Sigmoid colon (tissue), 7 donors: ENCODE measurements at regions of chr12 and their contacts with region 1.

Region 1: GRCh38 chr12:20369305-20370005 is 1.1 kb downstream of the PDE3A start:
- DNase-seq: peak; percentile 94
- H3K4me3 ChIP-seq: peak overlapping the region; percentile 81 to 89 (median 84)
- H3K27ac ChIP-seq: peak overlapping the region; percentile 91 to 96 (median 94)
- H3K4me1 ChIP-seq: peaks cover 0 to 25% (median 18%) of the 10 kb centered on the region in 4 donors
- H3K27me3 ChIP-seq: no peaks in the 10 kb centered on the region
- CTCF ChIP-seq: peak in 3 of 4 experiments; percentile 22 to 37 (median 23)
- EP300 ChIP-seq: peak in 1 of 4 donors; percentile 3
- POLR2A ChIP-seq: peak; percentile 60 to 71

Region 2: GRCh38 chr12:19744734-19745218 is 624.7 kb before region 1 on chr12:
- intact Hi-C with region 1: loop called (anchors 5 kb)
- DNase-seq: no peak
- H3K4me3 ChIP-seq: no peak overlapping the region
- H3K27ac ChIP-seq: peak overlapping the region in 1 of 4 donors; percentile 17
- H3K4me1 ChIP-seq: peaks cover 0 to 42% (median 17%) of the 10 kb centered on the region in 4 donors
- H3K27me3 ChIP-seq: no peaks in the 10 kb centered on the region
- CTCF ChIP-seq: no peak
- EP300 ChIP-seq: peak in 1 of 4 donors; percentile 43
- POLR2A ChIP-seq: no peak

Region 3: DNA sequence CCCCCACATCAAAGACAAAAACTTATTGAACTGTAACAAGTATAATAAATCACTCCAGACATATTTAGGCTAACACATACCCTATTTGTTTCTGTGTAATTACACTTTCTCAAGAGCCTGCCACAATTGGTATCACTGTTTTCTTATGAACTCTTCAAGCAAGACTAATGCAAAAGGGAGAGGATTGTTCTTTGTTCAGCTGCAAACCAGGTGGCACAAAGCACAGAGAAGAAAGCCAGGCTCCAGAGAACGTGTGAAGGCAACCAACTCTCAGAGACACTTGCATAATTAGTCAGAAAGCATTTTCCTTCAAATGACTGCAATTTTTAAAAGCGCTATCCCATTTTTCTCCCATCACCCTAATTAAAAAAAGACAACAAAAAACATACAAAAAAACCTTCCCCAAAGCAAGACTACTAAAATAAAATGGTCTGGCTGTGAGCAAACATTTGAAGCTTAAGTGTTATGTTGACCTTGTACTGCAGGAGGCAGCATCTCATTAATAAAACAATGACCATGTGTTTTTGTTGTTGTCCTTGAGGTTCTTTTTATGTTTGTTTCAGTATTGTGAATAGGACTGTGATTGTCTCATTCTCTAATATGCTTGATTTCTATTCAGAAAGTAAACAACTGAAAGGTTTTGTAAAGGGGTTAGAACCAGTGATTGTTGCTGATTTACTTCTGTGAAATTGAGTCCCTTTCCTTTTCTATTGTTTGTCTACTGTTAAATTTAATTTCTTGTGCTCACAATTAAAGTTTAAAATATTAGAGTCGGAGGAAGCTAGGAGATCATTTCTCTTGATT is 453.9 kb before region 1 on chr12:
- intact Hi-C with region 1: loop called (anchors 5 kb)
- DNase-seq: no peak
- H3K4me3 ChIP-seq: no peak overlapping the region
- H3K27ac ChIP-seq: no peak overlapping the region
- H3K4me1 ChIP-seq: peaks cover 0 to 19% (median 12%) of the 10 kb centered on the region in 4 donors
- H3K27me3 ChIP-seq: no peaks in the 10 kb centered on the region
- CTCF ChIP-seq: peak; percentile 52 to 75 (median 54)
- EP300 ChIP-seq: no peak
- POLR2A ChIP-seq: no peak

Region 4: GRCh38 chr12:20125276-20125798 is 244.1 kb before region 1 on chr12:
- intact Hi-C with region 1: loop called (anchors 10 kb)
- DNase-seq: no peak
- H3K4me3 ChIP-seq: no peak overlapping the region
- H3K27ac ChIP-seq: peak overlapping the region in 2 of 4 donors; percentile 35 to 49
- H3K4me1 ChIP-seq: peaks cover 0 to 68% (median 25%) of the 10 kb centered on the region in 4 donors
- H3K27me3 ChIP-seq: no peaks in the 10 kb centered on the region
- CTCF ChIP-seq: no peak
- EP300 ChIP-seq: no peak
- POLR2A ChIP-seq: no peak

Region 5: DNA sequence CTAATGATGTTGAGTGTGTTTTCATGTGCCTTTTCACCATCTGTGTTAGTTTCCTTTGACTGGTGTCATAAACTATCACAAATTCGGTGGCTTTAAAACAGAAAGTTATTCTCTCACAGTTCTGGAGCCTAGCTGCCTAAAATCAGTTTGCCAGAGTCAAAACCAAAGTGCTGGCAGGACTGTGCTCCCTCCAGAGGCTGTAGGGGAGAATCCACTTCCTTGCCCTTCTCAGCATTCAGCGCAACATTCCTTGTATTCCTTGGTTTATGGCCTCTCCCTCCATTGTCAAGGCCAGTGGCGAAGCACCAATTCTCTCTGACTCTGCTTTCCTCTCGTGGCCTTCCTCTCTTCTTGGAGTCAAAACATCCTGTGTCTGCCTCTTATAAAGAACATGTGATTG is 175.3 kb before region 1 on chr12:
- intact Hi-C with region 1: no loop called
- DNase-seq: no peak
- H3K4me3 ChIP-seq: no peak overlapping the region
- H3K27ac ChIP-seq: no peak overlapping the region
- H3K4me1 ChIP-seq: peaks cover 0 to 20% (median 4%) of the 10 kb centered on the region in 4 donors
- H3K27me3 ChIP-seq: no peaks in the 10 kb centered on the region
- CTCF ChIP-seq: peak in 1 of 4 experiments; percentile 24
- EP300 ChIP-seq: no peak
- POLR2A ChIP-seq: no peak

Region 6: DNA sequence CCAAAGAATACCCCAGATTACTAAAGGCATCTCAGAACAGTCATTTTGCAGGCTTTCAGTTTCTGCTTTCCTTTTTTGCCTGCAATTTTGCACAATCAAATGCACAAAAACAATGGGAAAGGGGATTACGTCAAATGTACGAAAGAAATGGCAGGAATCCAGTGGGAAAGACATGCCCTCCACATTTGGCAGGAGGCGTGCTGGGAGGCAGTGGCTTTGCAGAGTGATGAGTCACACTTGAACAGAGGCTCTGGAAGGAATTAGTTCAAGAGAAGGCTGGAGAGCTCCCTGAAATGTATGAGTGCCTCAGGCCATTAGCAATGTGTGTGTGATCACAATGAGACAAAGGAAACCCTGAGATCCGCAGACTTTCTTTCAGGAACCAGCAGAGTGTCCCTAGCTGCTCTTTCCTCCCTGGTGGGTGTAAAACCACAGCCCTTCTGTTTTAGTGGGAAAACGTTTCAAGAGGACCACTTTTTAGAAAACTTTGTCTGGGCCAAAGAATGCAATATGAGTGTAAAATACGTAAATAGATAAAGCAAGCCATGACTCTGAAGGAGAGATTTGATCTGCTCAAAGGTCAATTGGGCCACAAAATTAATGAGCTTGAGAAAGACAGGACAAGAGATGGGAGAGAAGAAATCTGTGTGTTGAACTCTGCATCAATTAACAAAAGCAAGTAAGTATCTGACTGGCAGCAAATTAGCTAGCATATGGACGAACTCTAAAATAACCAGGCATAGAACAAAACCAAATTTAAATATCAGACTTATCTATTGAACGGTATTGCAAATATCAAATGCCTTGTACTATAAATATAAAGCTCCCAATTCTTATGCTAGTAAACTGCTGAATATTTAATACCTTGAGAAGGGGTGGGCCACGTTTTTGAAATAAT is 156.5 kb before region 1 on chr12:
- intact Hi-C with region 1: loop called (anchors 5 kb)
- DNase-seq: peak; percentile 95
- H3K4me3 ChIP-seq: peak overlapping the region in 2 of 4 donors; percentile 15 to 21
- H3K27ac ChIP-seq: peak overlapping the region; percentile 74 to 88 (median 78)
- H3K4me1 ChIP-seq: peaks cover 0 to 38% (median 32%) of the 10 kb centered on the region in 4 donors
- H3K27me3 ChIP-seq: no peaks in the 10 kb centered on the region
- CTCF ChIP-seq: no peak
- EP300 ChIP-seq: peak in 1 of 4 donors; percentile 71
- POLR2A ChIP-seq: no peak

Region 7: DNA sequence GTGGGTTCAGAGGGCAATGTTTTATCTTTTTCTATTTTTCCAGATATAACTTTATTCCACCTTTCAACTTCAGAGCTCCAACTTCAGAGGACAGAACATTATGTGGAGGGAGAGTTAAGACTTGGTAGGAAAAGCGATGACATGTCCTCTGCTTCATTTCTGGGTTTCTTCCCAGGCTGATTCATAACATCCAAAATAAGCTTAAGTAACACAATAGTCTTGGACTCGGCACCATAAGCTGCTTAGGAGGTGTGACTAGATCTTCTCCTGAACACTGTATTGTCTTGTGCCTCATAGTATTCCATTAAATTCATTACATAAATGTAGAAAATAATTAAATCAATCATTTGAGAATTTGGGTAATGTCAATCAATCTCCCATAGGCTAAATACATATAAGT is 96.7 kb before region 1 on chr12:
- intact Hi-C with region 1: loop called (anchors 5 kb)
- DNase-seq: no peak
- H3K4me3 ChIP-seq: no peak overlapping the region
- H3K27ac ChIP-seq: peak overlapping the region; percentile 59 to 74 (median 67)
- H3K4me1 ChIP-seq: peaks cover 0 to 64% (median 32%) of the 10 kb centered on the region in 4 donors
- H3K27me3 ChIP-seq: no peaks in the 10 kb centered on the region
- CTCF ChIP-seq: no peak
- EP300 ChIP-seq: no peak
- POLR2A ChIP-seq: no peak

Region 8: GRCh38 chr12:20283467-20283866 is 86.0 kb before region 1 on chr12:
- intact Hi-C with region 1: no loop called
- DNase-seq: no peak
- H3K4me3 ChIP-seq: no peak overlapping the region
- H3K27ac ChIP-seq: no peak overlapping the region
- H3K4me1 ChIP-seq: no peaks in the 10 kb centered on the region
- H3K27me3 ChIP-seq: no peaks in the 10 kb centered on the region
- CTCF ChIP-seq: no peak
- EP300 ChIP-seq: no peak
- POLR2A ChIP-seq: no peak

Region 9: DNA sequence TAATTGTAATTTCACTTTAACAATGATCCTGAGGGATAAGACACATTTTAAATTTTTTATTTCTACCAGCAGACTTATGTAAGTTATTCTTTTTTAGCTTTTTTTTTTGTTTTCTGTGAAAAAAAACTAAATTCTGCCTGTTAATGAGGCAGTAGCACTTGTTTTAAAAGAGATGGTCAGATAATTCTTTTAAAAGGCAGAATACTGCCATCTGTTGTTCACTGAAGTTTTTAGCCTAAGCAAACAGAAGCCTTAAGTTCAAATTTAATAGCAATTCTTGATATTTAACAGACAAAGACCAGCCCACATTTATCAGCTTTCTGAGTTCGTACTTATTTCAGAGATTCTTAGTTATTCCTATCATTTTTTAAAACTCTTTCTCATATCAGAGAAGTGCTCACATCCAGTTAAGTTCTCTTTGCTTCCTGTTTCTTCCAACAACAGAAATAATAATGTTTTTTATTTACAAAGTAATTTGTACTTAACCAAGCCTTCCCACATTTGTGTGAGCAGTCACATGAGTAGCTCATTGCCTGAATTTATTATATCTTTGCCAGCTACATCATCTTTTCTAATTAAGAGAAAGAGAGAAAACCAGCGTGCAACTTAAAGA is 232.3 kb after region 1 on chr12:
- intact Hi-C with region 1: loop called (anchors 2 kb)
- DNase-seq: no peak
- H3K4me3 ChIP-seq: peak overlapping the region in 2 of 4 donors; percentile 1 to 5
- H3K27ac ChIP-seq: peak overlapping the region; percentile 42 to 80 (median 69)
- H3K4me1 ChIP-seq: peaks cover 0 to 44% (median 18%) of the 10 kb centered on the region in 4 donors
- H3K27me3 ChIP-seq: no peaks in the 10 kb centered on the region
- CTCF ChIP-seq: peak; percentile 20 to 57 (median 38)
- EP300 ChIP-seq: no peak
- POLR2A ChIP-seq: no peak

Region 10: DNA sequence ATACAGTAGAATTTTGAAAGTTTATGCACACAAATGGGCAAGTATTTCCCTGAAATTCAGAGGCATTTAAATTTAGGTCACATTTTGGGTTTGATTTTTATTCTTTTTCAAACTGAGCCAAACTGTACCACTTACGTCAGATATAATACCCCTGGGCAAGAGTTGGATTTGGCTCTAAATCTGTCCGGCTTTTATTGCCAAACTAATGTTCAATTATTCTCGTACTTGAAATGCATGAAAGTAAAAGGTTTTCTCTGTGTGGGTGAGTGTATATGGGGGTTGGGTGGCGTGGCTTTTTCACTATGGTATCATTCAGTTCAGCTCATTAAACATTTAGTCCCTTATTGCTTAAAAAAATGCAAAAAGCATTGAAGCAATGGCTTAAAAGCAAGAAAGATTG is 381.6 kb after region 1 on chr12:
- intact Hi-C with region 1: no loop called
- DNase-seq: no peak
- H3K4me3 ChIP-seq: no peak overlapping the region
- H3K27ac ChIP-seq: no peak overlapping the region
- H3K4me1 ChIP-seq: no peaks in the 10 kb centered on the region
- H3K27me3 ChIP-seq: no peaks in the 10 kb centered on the region
- CTCF ChIP-seq: no peak
- EP300 ChIP-seq: no peak
- POLR2A ChIP-seq: no peak

Region 11: GRCh38 chr12:20777420-20777819 is 408.0 kb after region 1 on chr12:
- intact Hi-C with region 1: no loop called
- DNase-seq: no peak
- H3K4me3 ChIP-seq: no peak overlapping the region
- H3K27ac ChIP-seq: no peak overlapping the region
- H3K4me1 ChIP-seq: no peaks in the 10 kb centered on the region
- H3K27me3 ChIP-seq: no peaks in the 10 kb centered on the region
- CTCF ChIP-seq: no peak
- EP300 ChIP-seq: no peak
- POLR2A ChIP-seq: no peak